Right ventricle myocardium superior (tissue), 1 donor: ENCODE measurements at regions of chr13 and their contacts with region 1.

Region 1: GRCh38 chr13:31174018-31174417 is 12.3 kb upstream of the HSPH1 start:
- DNase-seq: no peak
- ATAC-seq: no peak

Region 2: GRCh38 chr13:31115616-31116015 is 58.4 kb before region 1 on chr13:
- intact Hi-C with region 1: no loop called
- DNase-seq: no peak
- ATAC-seq: no peak

Region 3: GRCh38 chr13:31424117-31424729 is 250.2 kb after region 1 on chr13:
- intact Hi-C with region 1: loop called (anchors 10 kb)
- DNase-seq: peak; percentile 79
- ATAC-seq: peak; percentile 98